Mammary epithelial cell (primary cell): ENCODE measurements at regions of chr6 and their contacts with region 1.

Region 1: DNA sequence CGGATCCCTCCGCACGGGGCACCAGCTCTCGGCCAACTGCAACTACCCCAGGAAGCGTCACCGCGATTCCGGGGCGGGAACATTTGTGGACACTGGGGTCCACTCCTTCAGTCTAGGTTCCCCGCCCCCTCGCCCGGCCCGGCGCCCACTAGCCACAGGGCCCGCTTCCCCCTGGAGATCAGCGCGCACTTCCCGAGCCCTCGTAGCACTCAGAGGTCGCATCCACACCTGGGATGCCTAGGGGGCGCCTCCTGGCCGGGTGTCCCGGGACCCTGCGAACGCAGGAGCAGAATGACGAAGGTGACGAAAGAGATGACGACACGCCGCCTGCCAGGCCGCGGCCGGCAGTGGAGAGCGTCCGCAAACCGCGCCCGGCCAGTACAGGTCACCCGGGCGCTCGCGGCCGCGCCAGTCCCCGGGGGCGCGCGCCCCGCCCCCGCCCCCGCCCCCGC is 309 bp upstream of the AIG1 start:
- DNase-seq: peak; percentile 82
- H3K4me3 ChIP-seq: peak overlapping the region; percentile 65 to 88 (median 66)
- H3K27ac ChIP-seq: peak overlapping the region; percentile 98
- H3K4me1 ChIP-seq: peaks cover 47% of the 10 kb centered on the region
- H3K27me3 ChIP-seq: no peaks in the 10 kb centered on the region
- CTCF ChIP-seq: peak in 1 of 2 donors; percentile 32

Region 2: GRCh38 chr6:142566628-142567396 is 493.6 kb before region 1 on chr6:
- CTCF ChIA-PET with region 1: no interaction called
- dilution Hi-C with region 1: no loop called
- in situ Hi-C with region 1: no loop called
- intact Hi-C with region 1: loop called (anchors 10 kb)
- DNase-seq: peak; percentile 52
- H3K4me3 ChIP-seq: no peak overlapping the region
- H3K27ac ChIP-seq: no peak overlapping the region
- H3K4me1 ChIP-seq: peaks cover 35% of the 10 kb centered on the region
- H3K27me3 ChIP-seq: no peaks in the 10 kb centered on the region
- CTCF ChIP-seq: peak; percentile 95 to 99

Region 3: DNA sequence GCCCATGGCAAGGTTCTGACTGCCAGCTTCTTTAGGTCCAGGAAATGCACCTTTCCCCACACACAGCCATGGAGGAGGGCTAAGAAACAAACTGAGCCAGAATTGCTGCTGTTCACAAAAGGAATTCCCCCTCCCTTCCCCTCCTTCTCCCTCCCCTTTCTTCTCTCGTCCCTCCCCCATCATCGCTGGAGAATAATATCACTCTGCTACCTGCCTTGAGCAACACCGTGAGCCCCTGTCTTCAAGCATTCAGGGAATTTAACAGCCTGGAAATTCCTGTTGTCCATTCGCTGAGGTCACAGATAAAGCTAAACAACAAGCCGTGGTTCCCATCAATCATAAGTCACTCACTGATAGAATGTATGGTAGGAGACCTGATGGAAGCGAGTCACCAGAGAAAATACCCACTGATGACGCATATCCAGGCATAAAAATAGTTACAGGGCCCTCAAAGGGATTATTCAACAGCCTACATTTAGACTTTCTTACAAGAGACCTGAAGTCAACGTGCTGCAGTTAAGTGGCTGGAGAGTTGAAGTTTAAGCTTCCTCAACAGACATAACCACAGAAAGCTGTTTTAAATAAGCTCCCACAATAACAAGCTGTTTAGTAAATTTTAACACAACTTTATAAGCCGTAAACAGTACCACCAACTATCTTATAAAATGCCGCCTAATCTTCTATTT is 175.1 kb before region 1 on chr6:
- CTCF ChIA-PET with region 1: no interaction called
- dilution Hi-C with region 1: no loop called
- in situ Hi-C with region 1: no loop called
- intact Hi-C with region 1: loop called (anchors 1 kb)
- DNase-seq: peak; percentile 99
- H3K4me3 ChIP-seq: peak overlapping the region; percentile 7 to 37 (median 29)
- H3K27ac ChIP-seq: peak overlapping the region; percentile 86
- H3K4me1 ChIP-seq: peaks cover 25% of the 10 kb centered on the region
- H3K27me3 ChIP-seq: no peaks in the 10 kb centered on the region
- CTCF ChIP-seq: no peak

Region 4: GRCh38 chr6:142952614-142953013 is 107.8 kb before region 1 on chr6:
- CTCF ChIA-PET with region 1: no interaction called
- dilution Hi-C with region 1: no loop called
- in situ Hi-C with region 1: loop called (anchors 10 kb)
- intact Hi-C with region 1: no loop called
- DNase-seq: no peak
- H3K4me3 ChIP-seq: no peak overlapping the region
- H3K27ac ChIP-seq: no peak overlapping the region
- H3K4me1 ChIP-seq: peaks cover 4% of the 10 kb centered on the region
- H3K27me3 ChIP-seq: no peaks in the 10 kb centered on the region
- CTCF ChIP-seq: no peak

Region 5: DNA sequence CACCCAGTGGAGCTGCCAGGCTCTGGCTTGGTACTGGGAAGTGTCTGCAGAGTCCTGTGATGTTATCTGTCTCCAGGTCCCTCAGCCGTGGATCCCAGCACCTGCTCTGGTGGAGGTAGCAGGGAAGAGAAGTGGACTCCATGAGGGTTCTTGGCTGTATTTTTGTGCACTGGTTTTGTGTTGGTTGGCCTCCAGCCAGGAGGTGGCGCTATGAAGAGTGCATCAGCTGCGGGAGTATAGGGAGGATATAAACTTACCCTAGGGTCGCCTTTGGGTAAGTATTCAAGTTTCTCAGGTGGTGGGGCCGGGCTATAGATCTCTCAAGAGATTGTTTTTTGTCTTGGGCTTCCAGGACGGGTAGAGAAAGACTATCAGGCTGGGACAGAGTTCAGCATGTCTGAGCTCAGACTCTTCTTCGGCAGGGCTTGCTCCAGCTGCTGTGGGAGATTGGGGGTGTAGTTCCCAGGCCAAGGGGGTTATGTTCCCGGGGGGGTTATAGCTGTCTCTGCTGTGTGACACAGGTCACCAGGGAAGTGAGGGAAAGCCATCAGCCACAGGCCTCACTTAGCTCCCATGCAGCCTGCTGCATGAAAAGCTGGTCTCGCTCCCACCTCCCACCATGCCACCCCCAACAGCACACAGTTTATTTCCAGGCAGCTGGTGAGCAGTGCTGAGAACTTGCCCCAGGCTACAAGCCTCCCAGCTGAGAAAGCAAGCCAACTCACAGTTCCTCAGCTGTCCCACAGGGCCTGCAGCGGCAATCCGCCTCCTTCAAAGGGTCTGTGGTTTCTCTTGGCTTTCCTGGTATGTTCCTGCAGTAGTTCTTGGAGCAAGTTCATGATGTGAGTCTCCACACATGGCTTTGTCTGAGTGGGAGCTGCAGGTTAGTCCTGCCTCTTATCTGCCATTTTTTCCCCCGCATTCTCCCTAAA is 116.0 kb after region 1 on chr6:
- CTCF ChIA-PET with region 1: no interaction called
- dilution Hi-C with region 1: no loop called
- in situ Hi-C with region 1: no loop called
- intact Hi-C with region 1: loop called (anchors 5 kb)
- DNase-seq: peak; percentile 92
- H3K4me3 ChIP-seq: no peak overlapping the region
- H3K27ac ChIP-seq: peak overlapping the region; percentile 39
- H3K4me1 ChIP-seq: peaks cover 16% of the 10 kb centered on the region
- H3K27me3 ChIP-seq: no peaks in the 10 kb centered on the region
- CTCF ChIP-seq: peak in 1 of 2 donors; percentile 21

Region 6: DNA sequence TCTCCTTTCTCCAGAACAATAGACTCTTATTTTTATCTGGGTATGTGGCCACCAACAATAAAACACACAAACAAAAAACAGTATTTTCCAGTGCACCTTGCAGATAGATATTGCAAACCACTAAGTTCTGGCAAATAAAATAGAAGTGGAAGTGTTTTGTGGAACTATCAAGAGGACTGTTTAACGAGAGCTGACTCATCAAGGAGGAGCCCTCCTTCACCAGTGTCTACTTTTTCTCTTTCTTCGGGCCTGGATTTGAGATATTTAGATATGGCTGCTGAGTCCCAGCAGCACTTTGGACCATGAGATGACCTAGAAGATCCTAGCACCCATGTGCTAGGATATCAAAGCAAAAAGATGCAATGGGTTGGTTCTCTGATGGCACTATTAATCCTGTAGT is 155.0 kb after region 1 on chr6:
- CTCF ChIA-PET with region 1: no interaction called
- dilution Hi-C with region 1: no loop called
- in situ Hi-C with region 1: no loop called
- intact Hi-C with region 1: no loop called
- DNase-seq: no peak
- H3K4me3 ChIP-seq: no peak overlapping the region
- H3K27ac ChIP-seq: no peak overlapping the region
- H3K4me1 ChIP-seq: no peaks in the 10 kb centered on the region
- H3K27me3 ChIP-seq: no peaks in the 10 kb centered on the region
- CTCF ChIP-seq: no peak

Region 7: DNA sequence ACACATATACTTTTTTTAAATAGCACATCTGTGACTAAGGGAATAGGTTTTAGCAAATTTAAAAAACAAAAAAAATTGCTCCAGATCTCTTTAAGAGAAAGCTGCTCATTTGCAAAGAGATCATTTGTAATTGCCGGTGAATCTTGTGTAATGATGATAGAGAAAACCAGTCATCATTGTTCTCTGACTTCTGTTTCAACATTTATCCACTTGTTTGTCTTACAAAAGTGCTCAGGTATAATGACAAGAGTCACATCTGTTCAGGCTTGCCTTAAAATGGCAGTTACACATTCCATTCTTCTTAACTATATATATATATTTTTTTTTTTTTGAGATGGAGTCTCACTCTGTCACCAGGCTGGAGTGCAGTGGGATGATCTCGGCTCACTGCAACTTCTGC is 165.5 kb after region 1 on chr6:
- CTCF ChIA-PET with region 1: no interaction called
- dilution Hi-C with region 1: no loop called
- in situ Hi-C with region 1: no loop called
- intact Hi-C with region 1: loop called (anchors 5 kb)
- DNase-seq: peak; percentile 91
- H3K4me3 ChIP-seq: no peak overlapping the region
- H3K27ac ChIP-seq: peak overlapping the region; percentile 93
- H3K4me1 ChIP-seq: peaks cover 28% of the 10 kb centered on the region
- H3K27me3 ChIP-seq: no peaks in the 10 kb centered on the region
- CTCF ChIP-seq: no peak

Region 8: DNA sequence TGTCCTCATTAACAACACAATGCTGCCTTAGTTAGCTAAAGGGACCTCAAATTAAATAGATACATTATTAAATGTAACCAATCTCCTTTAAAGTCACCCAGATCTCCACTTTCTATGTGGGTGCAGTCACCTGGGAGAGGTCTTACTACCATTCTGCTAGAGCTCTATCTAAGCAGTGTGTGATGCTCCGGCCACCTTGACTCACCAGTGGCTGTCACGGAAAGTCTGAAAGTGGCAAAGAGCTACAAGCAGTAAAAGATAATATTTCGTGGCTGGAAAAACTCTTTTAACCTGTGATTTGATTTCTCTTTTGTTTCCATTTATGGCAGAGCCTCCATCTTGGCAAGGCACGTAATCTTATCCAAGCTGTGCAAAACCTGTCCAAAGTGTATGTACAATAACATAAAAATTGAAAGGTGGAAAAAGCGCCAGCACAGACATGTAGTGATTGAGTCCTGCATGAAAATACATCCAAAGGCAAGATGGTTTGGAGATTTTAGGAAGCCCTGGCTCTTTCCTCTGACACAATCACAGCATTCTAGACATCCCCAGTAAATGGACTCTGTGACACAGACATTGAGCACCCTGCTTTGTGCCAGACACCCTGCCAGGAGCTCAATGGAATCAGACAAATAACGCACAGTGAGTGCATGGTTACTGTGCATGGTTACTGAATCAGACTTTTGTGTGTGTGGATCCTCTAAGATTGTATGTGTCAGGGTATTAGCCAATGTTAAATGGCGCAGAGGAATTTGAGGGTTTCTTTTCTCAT is 273.6 kb after region 1 on chr6:
- CTCF ChIA-PET with region 1: no interaction called
- dilution Hi-C with region 1: no loop called
- in situ Hi-C with region 1: no loop called
- intact Hi-C with region 1: loop called (anchors 5 kb)
- DNase-seq: peak; percentile 52
- H3K4me3 ChIP-seq: peak overlapping the region in 2 of 3 experiments; percentile 9 to 21
- H3K27ac ChIP-seq: peak overlapping the region; percentile 98
- H3K4me1 ChIP-seq: peaks cover 73% of the 10 kb centered on the region
- H3K27me3 ChIP-seq: no peaks in the 10 kb centered on the region
- CTCF ChIP-seq: no peak